Adrenal gland (tissue), 19 donors: ENCODE measurements at regions of chr5 and their contacts with region 1.

Region 1: GRCh38 chr5:142713121-142713706 is 27.3 kb upstream of the FGF1 start:
- DNase-seq: peak; percentile 86 to 95 (median 89)
- H3K4me3 ChIP-seq: peak overlapping the region in 2 of 4 donors; percentile 29 to 52
- H3K27ac ChIP-seq: peak overlapping the region in 4 of 5 donors; percentile 28 to 87 (median 72)
- H3K4me1 ChIP-seq: peaks cover 0 to 4% of the 10 kb centered on the region in 2 donors
- H3K27me3 ChIP-seq: no peaks in the 10 kb centered on the region
- CTCF ChIP-seq: peak; percentile 88 to 98 (median 95)
- POLR2A ChIP-seq: no peak

Region 2: DNA sequence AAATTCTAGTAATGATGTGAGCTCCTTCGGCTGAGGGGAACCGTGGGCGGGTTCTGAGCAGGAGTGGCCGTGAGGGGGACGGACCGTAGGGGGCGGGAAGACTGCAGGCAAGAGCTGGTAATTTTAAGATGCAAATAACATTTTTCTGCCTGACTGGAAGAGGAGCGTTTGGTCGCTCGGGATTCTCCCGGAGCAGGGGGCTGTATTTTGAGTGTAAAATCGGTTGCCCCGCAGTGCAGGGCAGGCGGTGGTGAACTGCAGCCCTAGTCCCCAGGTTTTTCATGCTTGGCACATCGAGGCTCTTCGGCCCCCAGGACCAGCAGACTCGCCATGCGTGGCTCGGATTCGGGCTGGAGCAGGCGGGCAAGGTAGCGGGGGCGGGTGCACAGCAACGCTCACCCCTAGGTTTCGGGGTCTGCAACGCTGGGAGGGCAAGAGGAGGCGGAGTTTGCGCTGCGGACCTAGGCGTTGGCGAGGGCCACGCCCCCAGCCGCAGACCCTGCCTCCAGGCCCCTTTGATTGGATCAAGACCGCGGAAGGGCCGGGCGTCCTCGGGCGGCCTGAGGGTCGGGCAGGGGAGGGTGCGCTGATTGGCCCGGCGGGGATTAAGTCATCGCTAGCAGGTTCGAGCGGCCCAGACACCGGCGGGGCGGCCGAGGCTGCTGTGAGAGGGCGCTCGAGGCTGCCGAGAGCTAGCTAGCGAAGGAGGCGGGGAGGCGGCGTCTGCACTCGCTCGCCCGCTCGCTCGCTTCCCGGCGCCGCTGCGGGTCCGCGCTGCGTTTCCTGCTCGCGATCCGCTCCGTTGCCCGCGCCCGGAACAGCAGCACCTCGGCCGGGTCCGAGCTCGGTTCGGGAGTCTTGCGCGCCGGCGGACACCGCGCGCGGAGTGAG is 56.8 kb after region 1 on chr5 and contains the start of gene ARHGAP26:
- intact Hi-C with region 1: loop called in 1 of 2 experiments (anchors 5 kb)
- DNase-seq: peak; percentile 95 to 98 (median 97)
- H3K4me3 ChIP-seq: peak within 1 kb of the TSS; percentile 42 to 88 (median 72)
- H3K27ac ChIP-seq: peak within 1 kb of the TSS in 4 of 5 donors; percentile 69 to 94 (median 76)
- H3K4me1 ChIP-seq: peaks cover 4 to 16% of the 10 kb centered on the region in 2 donors
- H3K27me3 ChIP-seq: no peaks in the 10 kb centered on the region
- CTCF ChIP-seq: peak in 4 of 6 experiments; percentile 10 to 42 (median 26)
- POLR2A ChIP-seq: peak; percentile 96 to 98
- total RNA-seq, gene ARHGAP26: 3.0 to 21.7 (median 12.2) TPM

Region 3: DNA sequence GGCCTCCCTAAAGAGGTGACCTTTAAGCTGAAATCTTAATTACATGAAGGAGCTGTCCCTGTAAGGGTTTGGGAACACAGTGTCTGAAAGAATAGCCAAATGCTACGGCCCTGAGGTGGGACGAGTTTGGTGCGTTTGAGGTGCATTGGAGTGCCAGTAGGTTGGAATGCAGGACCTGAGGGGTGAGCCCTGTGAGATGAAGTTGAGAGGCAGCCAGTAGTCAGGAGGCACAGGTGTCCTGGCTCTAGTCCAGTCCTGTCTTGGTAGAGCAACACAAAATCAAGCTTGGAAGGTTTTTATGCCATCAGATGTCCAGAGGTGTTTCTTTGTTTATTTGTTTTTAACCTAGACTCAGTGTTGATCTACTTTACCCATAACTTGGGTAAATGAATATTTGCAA is 165.4 kb after region 1 on chr5:
- intact Hi-C with region 1: loop called (anchors 5 kb)
- DNase-seq: no peak
- H3K4me3 ChIP-seq: no peak overlapping the region
- H3K27ac ChIP-seq: no peak overlapping the region
- H3K4me1 ChIP-seq: peaks cover 0 to 56% of the 10 kb centered on the region in 2 donors
- H3K27me3 ChIP-seq: no peaks in the 10 kb centered on the region
- CTCF ChIP-seq: no peak
- POLR2A ChIP-seq: no peak